ENCODE measurements at regions of chr6 and their contacts with region 1.

Region 1: DNA sequence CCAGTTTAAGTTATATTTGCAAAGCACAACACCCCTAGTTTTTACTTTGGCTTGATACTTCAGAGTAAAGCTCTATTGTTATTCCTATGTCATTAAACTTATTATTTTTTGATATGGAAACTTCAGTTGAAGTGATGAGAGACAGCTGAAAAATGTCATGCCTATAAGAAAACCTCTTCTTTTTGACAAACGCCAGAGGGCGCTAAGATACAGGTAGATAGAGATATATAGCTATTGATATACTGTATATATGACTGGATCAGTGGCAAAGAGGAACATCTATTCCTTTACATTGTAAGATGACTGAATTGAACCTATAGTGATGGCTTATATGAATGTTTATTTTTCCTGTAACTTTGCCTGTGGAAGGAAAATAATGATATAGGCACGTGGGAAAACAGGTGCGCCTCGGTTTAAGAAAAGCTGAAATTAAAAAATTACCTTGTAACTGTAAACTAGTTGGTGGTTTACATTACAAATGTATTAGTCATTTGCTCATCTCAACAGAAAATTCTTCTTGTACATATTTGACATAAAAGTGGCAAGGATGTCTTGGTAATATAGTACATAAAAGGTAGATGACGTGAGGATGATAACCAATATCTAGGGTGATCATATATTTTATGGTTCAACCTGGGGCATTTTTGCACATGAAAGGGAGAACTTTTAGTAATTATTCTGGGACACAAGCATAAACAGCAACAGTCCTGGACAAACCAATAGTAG is 74.1 kb downstream of the LAMA4 start:
- DNase-seq: peak; percentile 46
- H3K4me3 ChIP-seq: no peak overlapping the region
- H3K27ac ChIP-seq: no peak overlapping the region
- H3K4me1 ChIP-seq: no peaks in the 10 kb centered on the region
- H3K27me3 ChIP-seq: no peaks in the 10 kb centered on the region
- CTCF ChIP-seq: peak; percentile 55

Region 2: GRCh38 chr6:111894272-111894671 is 286.0 kb before region 1 on chr6:
- intact Hi-C with region 1: no loop called
- DNase-seq: no peak
- H3K4me3 ChIP-seq: no peak overlapping the region
- H3K27ac ChIP-seq: no peak overlapping the region
- H3K4me1 ChIP-seq: no peaks in the 10 kb centered on the region
- H3K27me3 ChIP-seq: no peaks in the 10 kb centered on the region
- CTCF ChIP-seq: no peak

Region 3: GRCh38 chr6:112311950-112312547 is 131.8 kb after region 1 on chr6:
- intact Hi-C with region 1: loop called (anchors 5 kb)
- DNase-seq: no peak
- H3K4me3 ChIP-seq: no peak overlapping the region
- H3K27ac ChIP-seq: no peak overlapping the region
- H3K4me1 ChIP-seq: no peaks in the 10 kb centered on the region
- H3K27me3 ChIP-seq: no peaks in the 10 kb centered on the region
- CTCF ChIP-seq: peak; percentile 33

Region 4: GRCh38 chr6:112372226-112372806 is 192.1 kb after region 1 on chr6:
- intact Hi-C with region 1: loop called (anchors 10 kb)
- DNase-seq: no peak
- H3K4me3 ChIP-seq: no peak overlapping the region
- H3K27ac ChIP-seq: no peak overlapping the region
- H3K4me1 ChIP-seq: no peaks in the 10 kb centered on the region
- H3K27me3 ChIP-seq: no peaks in the 10 kb centered on the region
- CTCF ChIP-seq: no peak

Region 5: GRCh38 chr6:112594886-112595594 is 414.8 kb after region 1 on chr6:
- intact Hi-C with region 1: no loop called
- DNase-seq: no peak
- H3K4me3 ChIP-seq: no peak overlapping the region
- H3K27ac ChIP-seq: no peak overlapping the region
- H3K4me1 ChIP-seq: no peaks in the 10 kb centered on the region
- H3K27me3 ChIP-seq: no peaks in the 10 kb centered on the region
- CTCF ChIP-seq: no peak